ENCODE measurements at regions of chr10 and their contacts with region 1.

Region 1: DNA sequence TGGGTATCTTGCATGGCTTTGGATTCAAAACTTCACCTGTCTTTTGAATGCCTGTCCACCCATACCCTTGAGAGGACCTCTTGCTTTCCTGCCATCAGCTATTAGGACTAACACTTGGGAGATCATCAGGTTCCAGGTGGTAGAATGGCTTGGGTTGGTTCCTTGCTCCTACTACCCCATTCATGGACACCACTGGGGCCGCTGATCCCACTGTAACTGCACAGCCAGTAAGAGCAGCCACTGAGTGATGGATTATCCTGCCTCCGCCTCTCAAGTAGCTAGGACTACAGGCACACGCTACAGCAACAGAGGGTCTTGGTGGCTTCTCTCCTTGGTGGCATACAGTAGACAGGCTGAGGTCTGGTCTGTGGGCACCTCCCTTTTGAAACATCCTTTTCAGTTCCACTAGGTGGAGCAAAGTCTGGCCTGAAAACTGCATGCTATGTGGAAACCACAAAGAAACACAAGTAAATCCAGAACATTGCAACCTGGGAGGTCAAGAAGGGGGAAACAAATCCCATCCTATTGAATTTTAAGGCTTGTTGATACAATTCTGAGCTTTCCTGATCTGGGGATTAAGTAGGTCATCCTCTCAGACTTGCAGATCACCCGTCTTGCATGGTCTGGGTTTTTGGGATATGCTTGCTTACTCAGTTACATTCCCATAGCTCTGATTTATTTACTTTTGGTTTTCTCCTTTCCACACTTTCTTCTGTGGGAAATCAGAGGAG is 9.4 kb downstream of the WBP1L start:
- DNase-seq: peak in 4 of 14 experiments; percentile 16 to 57 (median 41)
- ATAC-seq: peak; percentile 87
- H3K4me3 ChIP-seq: no peak overlapping the region
- H3K4me3 Mint-ChIP-seq: no peak overlapping the region
- H3K27ac ChIP-seq: no peak overlapping the region
- H3K27ac Mint-ChIP-seq: peak overlapping the region; percentile 48
- H3K4me1 ChIP-seq: peaks cover 27% of the 10 kb centered on the region
- H3K4me1 Mint-ChIP-seq: peaks cover 58% of the 10 kb centered on the region
- H3K27me3 ChIP-seq: no peaks in the 10 kb centered on the region
- H3K27me3 Mint-ChIP-seq: no peaks in the 10 kb centered on the region
- CTCF ChIP-seq: peak; percentile 32

Region 2: GRCh38 chr10:102776779-102777456 is 23.8 kb after region 1 on chr10:
- CTCF ChIA-PET with region 1: interaction called, 8 read pairs
- POLR2A ChIA-PET with region 1: no interaction called
- intact Hi-C with region 1: loop called in 1 of 2 experiments (anchors 1 kb)
- DNase-seq: peak in 6 of 14 experiments; percentile 7 to 64 (median 24)
- ATAC-seq: peak; percentile 52
- H3K4me3 ChIP-seq: no peak overlapping the region
- H3K4me3 Mint-ChIP-seq: peak overlapping the region; percentile 11
- H3K27ac ChIP-seq: no peak overlapping the region
- H3K27ac Mint-ChIP-seq: peak overlapping the region; percentile 78
- H3K4me1 ChIP-seq: peaks cover 47% of the 10 kb centered on the region
- H3K4me1 Mint-ChIP-seq: peaks cover 71% of the 10 kb centered on the region
- H3K27me3 ChIP-seq: no peaks in the 10 kb centered on the region
- H3K27me3 Mint-ChIP-seq: no peaks in the 10 kb centered on the region
- CTCF ChIP-seq: no peak

Region 3: GRCh38 chr10:102791754-102792395 is 38.8 kb after region 1 on chr10:
- CTCF ChIA-PET with region 1: no interaction called
- POLR2A ChIA-PET with region 1: no interaction called
- intact Hi-C with region 1: loop called in 1 of 2 experiments (anchors 5 kb)
- DNase-seq: no peak
- ATAC-seq: no peak
- H3K4me3 ChIP-seq: no peak overlapping the region
- H3K4me3 Mint-ChIP-seq: no peak overlapping the region
- H3K27ac ChIP-seq: no peak overlapping the region
- H3K27ac Mint-ChIP-seq: no peak overlapping the region
- H3K4me1 ChIP-seq: peaks cover 18% of the 10 kb centered on the region
- H3K4me1 Mint-ChIP-seq: peaks cover 45% of the 10 kb centered on the region
- H3K27me3 ChIP-seq: no peaks in the 10 kb centered on the region
- H3K27me3 Mint-ChIP-seq: no peaks in the 10 kb centered on the region
- CTCF ChIP-seq: no peak

Region 4: GRCh38 chr10:102853944-102854694 is 101.0 kb after region 1 on chr10 and contains the start of gene BORCS7:
- CTCF ChIA-PET with region 1: no interaction called
- POLR2A ChIA-PET with region 1: no interaction called
- intact Hi-C with region 1: loop called in 1 of 2 experiments (anchors 5 kb)
- DNase-seq: peak; percentile 70 to 94 (median 78)
- ATAC-seq: peak; percentile 99
- H3K4me3 ChIP-seq: peak within 1 kb of the TSS; percentile 98
- H3K4me3 Mint-ChIP-seq: peak within 1 kb of the TSS; percentile 85
- H3K27ac ChIP-seq: peak within 1 kb of the TSS; percentile 87 to 97
- H3K27ac Mint-ChIP-seq: peak within 1 kb of the TSS; percentile 96
- H3K4me1 ChIP-seq: peaks cover 15% of the 10 kb centered on the region
- H3K4me1 Mint-ChIP-seq: peaks cover 16% of the 10 kb centered on the region
- H3K27me3 ChIP-seq: no peaks in the 10 kb centered on the region
- H3K27me3 Mint-ChIP-seq: no peaks in the 10 kb centered on the region
- CTCF ChIP-seq: no peak
- total RNA-seq, gene BORCS7: 10.6 to 11.6 TPM